Upper lobe of right lung (tissue), 1 donor: ENCODE measurements at regions of chr2 and their contacts with region 1.

Region 1: GRCh38 chr2:199704358-199705238 is 146.4 kb downstream of the FTCDNL1 start:
- DNase-seq: no peak
- ATAC-seq: peak; percentile 93
- H3K4me3 ChIP-seq: no peak overlapping the region
- H3K27ac ChIP-seq: no peak overlapping the region
- H3K4me1 ChIP-seq: no peaks in the 10 kb centered on the region
- H3K27me3 ChIP-seq: no peaks in the 10 kb centered on the region
- CTCF ChIP-seq: peak; percentile 64

Region 2: GRCh38 chr2:199186301-199186751 is 518.3 kb before region 1 on chr2:
- intact Hi-C with region 1: no loop called
- DNase-seq: no peak
- ATAC-seq: no peak
- H3K4me3 ChIP-seq: no peak overlapping the region
- H3K27ac ChIP-seq: no peak overlapping the region
- H3K4me1 ChIP-seq: no peaks in the 10 kb centered on the region
- H3K27me3 ChIP-seq: no peaks in the 10 kb centered on the region
- CTCF ChIP-seq: no peak

Region 3: DNA sequence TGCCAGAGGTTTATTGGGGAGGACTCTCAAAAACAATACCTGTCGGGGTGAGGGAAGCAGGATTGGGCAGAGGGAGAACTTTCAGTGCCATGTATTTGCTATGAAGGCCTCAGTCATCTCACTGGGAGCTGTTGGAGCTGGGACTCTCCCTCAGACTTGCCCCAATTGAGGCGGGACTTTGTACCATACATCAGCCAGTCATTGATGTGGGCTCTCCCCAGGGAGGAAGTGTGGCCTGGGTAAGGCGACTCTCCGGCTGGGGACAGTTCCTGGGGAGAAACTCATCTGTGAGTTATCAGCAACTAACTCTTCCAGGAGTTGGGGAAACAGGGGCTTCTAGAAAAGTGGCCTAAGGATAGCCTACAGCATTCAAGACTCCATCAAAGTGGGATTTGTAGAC is 79.9 kb after region 1 on chr2:
- intact Hi-C with region 1: no loop called
- DNase-seq: no peak
- ATAC-seq: no peak
- H3K4me3 ChIP-seq: no peak overlapping the region
- H3K27ac ChIP-seq: no peak overlapping the region
- H3K4me1 ChIP-seq: no peaks in the 10 kb centered on the region
- H3K27me3 ChIP-seq: no peaks in the 10 kb centered on the region
- CTCF ChIP-seq: no peak

Region 4: GRCh38 chr2:199861132-199861774 is 156.7 kb after region 1 on chr2:
- intact Hi-C with region 1: loop called (anchors 10 kb)
- DNase-seq: no peak
- ATAC-seq: no peak
- H3K4me3 ChIP-seq: no peak overlapping the region
- H3K27ac ChIP-seq: no peak overlapping the region
- H3K4me1 ChIP-seq: no peaks in the 10 kb centered on the region
- H3K27me3 ChIP-seq: peaks cover 5% of the 10 kb centered on the region
- CTCF ChIP-seq: peak; percentile 62